Activated CD4-positive, alpha-beta T cell treated with anti-CD3 and anti-CD28 coated beads for 36 hours (primary cell): ENCODE measurements at regions of chr11 and their contacts with region 1.

Region 1: GRCh38 chr11:7986768-7987559 is at the start of gene EIF3F:
- DNase-seq: peak; percentile 93
- ATAC-seq: peak; percentile 99
- H3K4me3 Mint-ChIP-seq: peak within 1 kb of the TSS; percentile 94
- H3K27ac Mint-ChIP-seq: peak within 1 kb of the TSS; percentile 99
- H3K4me1 Mint-ChIP-seq: peaks cover 37% of the 10 kb centered on the region
- H3K27me3 Mint-ChIP-seq: no peaks in the 10 kb centered on the region
- total RNA-seq, gene EIF3F: 270 to 289 TPM

Region 2: DNA sequence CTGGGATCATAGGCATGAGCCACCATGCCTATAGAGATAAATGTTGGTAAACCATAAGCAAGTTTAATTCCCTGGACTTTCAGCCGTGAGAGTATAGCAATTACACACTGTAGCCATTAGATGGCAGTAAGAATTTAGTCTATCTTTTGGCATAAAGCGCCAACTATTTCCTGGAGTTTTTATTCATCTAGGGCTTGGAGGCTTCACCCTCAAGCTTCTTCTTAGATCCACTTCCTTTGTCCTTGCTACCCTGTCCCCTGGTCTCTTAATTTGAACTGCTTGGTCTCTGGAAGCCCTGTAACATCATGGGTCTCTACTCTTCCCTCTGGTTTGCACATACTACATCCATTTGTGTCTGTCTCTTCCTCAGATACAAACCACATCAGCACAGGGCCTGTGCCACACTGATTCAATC is 94.1 kb before region 1 on chr11:
- CTCF ChIA-PET with region 1: interaction called, 70 read pairs
- POLR2A ChIA-PET with region 1: no interaction called
- intact Hi-C with region 1: loop called (anchors 1 kb)
- DNase-seq: no peak
- ATAC-seq: peak; percentile 75
- H3K4me3 Mint-ChIP-seq: no peak overlapping the region
- H3K27ac Mint-ChIP-seq: no peak overlapping the region
- H3K4me1 Mint-ChIP-seq: peaks cover 4% of the 10 kb centered on the region
- H3K27me3 Mint-ChIP-seq: peaks cover 9% of the 10 kb centered on the region

Region 3: DNA sequence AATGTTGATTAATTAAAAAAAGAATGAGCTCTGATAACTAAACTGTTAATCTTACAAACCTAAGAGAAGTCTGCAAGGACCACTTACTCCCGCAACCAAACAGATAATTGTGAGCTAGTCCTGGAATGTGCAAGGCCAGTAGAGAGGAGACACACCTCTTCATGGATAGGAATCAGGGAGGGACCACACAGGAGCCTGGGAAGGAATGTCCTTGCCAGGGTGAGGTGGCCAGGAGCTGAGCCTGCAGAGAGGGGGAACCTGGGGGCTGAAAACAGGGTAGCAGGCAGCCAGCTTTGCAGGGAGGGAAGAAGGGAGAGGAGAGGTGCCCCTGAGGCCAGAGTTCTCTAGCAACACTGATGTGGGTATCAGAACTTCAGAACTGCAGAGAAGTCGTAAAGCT is 12.3 kb before region 1 on chr11:
- CTCF ChIA-PET with region 1: interaction called, 17 read pairs
- POLR2A ChIA-PET with region 1: no interaction called
- intact Hi-C with region 1: no loop called
- DNase-seq: no peak
- ATAC-seq: no peak
- H3K4me3 Mint-ChIP-seq: no peak overlapping the region
- H3K27ac Mint-ChIP-seq: no peak overlapping the region
- H3K4me1 Mint-ChIP-seq: no peaks in the 10 kb centered on the region
- H3K27me3 Mint-ChIP-seq: peaks cover 5% of the 10 kb centered on the region

Region 4: DNA sequence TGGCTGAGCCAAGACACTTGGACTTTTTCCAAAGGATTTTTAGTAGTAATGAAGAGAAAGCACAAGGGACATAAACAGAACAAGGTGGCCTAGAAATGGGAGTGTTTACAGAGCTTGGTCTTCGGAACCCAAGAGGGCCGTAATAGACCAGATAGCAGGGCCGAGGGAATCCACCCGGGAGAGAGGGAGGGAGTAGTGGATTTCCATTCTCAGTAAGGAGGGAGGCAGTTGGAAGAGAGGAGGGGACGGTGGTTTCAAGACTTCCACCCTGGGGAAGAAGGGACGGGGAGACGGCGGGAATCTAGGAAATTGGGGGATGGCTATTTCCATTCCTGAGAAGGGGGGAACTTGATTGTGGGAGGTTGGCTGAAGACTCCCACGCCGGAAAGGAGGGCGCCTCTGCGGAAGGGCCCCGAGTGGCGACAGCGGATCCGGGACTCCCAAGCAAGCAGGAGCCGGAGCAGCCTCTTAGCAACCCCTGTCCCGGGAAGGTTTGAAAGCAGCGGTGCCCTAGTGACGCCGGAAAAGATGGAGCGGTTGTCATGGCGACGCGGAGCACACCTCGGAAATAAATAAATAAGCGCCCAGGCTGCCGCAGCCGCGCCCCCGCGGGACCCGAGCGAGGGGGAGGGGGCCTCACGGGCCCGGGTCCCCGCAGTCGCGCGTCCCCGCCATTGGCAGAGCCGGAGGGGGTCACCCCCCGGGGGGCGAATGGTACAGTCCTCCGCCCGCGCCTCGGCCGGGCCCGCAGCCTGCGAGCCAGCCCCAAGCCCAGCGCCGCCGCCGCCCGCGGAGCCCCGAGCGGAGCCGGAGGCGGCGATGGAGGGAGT is 31.7 kb after region 1 on chr11:
- CTCF ChIA-PET with region 1: interaction called, 7 read pairs
- POLR2A ChIA-PET with region 1: no interaction called
- intact Hi-C with region 1: loop called in 1 of 2 experiments (anchors 1 kb)
- DNase-seq: peak; percentile 67
- ATAC-seq: peak; percentile 57
- H3K4me3 Mint-ChIP-seq: peak overlapping the region; percentile 56
- H3K27ac Mint-ChIP-seq: no peak overlapping the region
- H3K4me1 Mint-ChIP-seq: peaks cover 10% of the 10 kb centered on the region
- H3K27me3 Mint-ChIP-seq: peaks cover 30% of the 10 kb centered on the region

Region 5: GRCh38 chr11:8126649-8127289 is 139.8 kb after region 1 on chr11:
- CTCF ChIA-PET with region 1: no interaction called
- POLR2A ChIA-PET with region 1: no interaction called
- intact Hi-C with region 1: no loop called
- DNase-seq: no peak
- ATAC-seq: no peak
- H3K4me3 Mint-ChIP-seq: no peak overlapping the region
- H3K27ac Mint-ChIP-seq: no peak overlapping the region
- H3K4me1 Mint-ChIP-seq: peaks cover 6% of the 10 kb centered on the region
- H3K27me3 Mint-ChIP-seq: no peaks in the 10 kb centered on the region

Region 6: GRCh38 chr11:8604078-8604723 is 617.2 kb after region 1 on chr11:
- CTCF ChIA-PET with region 1: no interaction called
- POLR2A ChIA-PET with region 1: no interaction called
- intact Hi-C with region 1: no loop called
- DNase-seq: peak; percentile 70
- ATAC-seq: peak; percentile 78
- H3K4me3 Mint-ChIP-seq: no peak overlapping the region
- H3K27ac Mint-ChIP-seq: no peak overlapping the region
- H3K4me1 Mint-ChIP-seq: no peaks in the 10 kb centered on the region
- H3K27me3 Mint-ChIP-seq: peaks cover 23% of the 10 kb centered on the region